Activated B cell treated with CpG ODN at 0.5 μM for 24 hours (primary cell): ENCODE measurements at regions of chr18 and their contacts with region 1.

Region 1: DNA sequence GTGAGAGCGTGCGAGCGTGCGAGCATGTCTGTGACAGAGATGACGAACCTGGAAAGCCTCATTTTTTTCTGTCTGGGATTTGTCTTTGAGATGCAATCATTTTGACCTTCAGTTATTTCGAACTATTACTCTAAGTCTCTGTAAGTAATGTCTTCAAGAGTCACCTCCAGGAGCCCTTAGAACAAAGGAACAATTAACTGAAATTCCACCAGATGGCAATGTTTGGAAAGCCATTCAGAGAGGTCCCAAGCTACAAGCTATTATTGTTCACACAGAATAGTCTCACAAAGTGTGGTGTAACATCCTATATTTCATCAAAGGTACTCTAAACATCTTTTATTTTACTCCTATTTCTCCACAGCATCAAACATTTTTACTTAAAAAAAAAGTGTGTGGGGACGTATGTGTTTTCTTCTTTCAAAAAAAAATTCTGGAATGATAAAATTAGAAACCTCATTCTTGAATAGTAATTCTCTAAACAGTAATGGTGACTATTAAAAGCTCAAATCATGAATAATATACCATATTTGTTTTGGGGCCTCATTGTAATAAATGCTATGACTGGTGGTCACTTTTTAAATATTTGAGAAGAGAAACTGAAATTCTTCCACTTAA is 35.1 kb upstream of the MAPRE2 start:
- DNase-seq: no peak
- ATAC-seq: peak; percentile 83
- H3K4me3 Mint-ChIP-seq: no peak overlapping the region
- H3K27ac Mint-ChIP-seq: no peak overlapping the region
- H3K4me1 Mint-ChIP-seq: no peaks in the 10 kb centered on the region
- H3K27me3 Mint-ChIP-seq: no peaks in the 10 kb centered on the region
- CTCF ChIP-seq: peak; percentile 39

Region 2: DNA sequence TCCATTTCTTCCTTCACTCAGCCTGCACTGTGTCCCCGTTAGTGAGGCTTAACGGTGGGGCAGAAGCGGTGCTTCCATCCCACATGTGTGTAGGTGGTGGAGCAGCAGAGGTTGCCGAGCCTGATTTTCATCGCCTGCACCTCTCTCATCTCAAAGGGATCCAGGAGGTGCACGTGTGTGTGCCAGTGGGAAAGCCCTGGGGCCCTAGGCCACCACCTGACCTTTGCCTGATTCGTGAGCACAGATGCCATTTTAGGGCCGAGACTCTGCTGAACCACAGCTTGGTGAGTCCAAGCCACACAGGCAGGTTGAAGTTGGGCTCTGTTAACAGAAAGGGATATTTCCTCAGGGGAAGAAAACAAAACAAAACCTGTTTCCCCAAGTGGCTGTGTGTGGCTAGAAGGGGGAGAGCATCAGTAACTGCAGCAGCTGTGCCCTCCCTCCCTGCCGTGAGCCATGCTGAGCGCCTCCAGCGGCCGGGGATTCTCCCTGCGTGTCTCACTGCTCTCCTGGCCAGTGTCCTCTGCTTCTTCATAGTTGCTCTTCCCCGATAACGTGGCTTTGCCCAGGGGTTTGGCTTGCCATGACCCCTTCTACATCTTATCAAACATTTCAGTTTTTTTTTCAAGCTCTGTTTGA is 116.6 kb after region 1 on chr18:
- CTCF ChIA-PET with region 1: interaction called, 11 read pairs
- POLR2A ChIA-PET with region 1: no interaction called
- intact Hi-C with region 1: loop called (anchors 5 kb)
- DNase-seq: no peak
- ATAC-seq: peak; percentile 91
- H3K4me3 Mint-ChIP-seq: peak overlapping the region; percentile 4
- H3K27ac Mint-ChIP-seq: peak overlapping the region; percentile 46
- H3K4me1 Mint-ChIP-seq: peaks cover 45% of the 10 kb centered on the region
- H3K27me3 Mint-ChIP-seq: no peaks in the 10 kb centered on the region
- CTCF ChIP-seq: no peak

Region 3: GRCh38 chr18:35185771-35186170 is 179.7 kb after region 1 on chr18:
- CTCF ChIA-PET with region 1: interaction called, 4 read pairs
- POLR2A ChIA-PET with region 1: no interaction called
- intact Hi-C with region 1: loop called (anchors 1 kb)
- DNase-seq: no peak
- ATAC-seq: no peak
- H3K4me3 Mint-ChIP-seq: no peak overlapping the region
- H3K27ac Mint-ChIP-seq: no peak overlapping the region
- H3K4me1 Mint-ChIP-seq: peaks cover 4% of the 10 kb centered on the region
- H3K27me3 Mint-ChIP-seq: no peaks in the 10 kb centered on the region
- CTCF ChIP-seq: no peak

Region 4: GRCh38 chr18:35355140-35355618 is 349.1 kb after region 1 on chr18:
- CTCF ChIA-PET with region 1: interaction called, 8 read pairs
- POLR2A ChIA-PET with region 1: interaction called, 3 read pairs
- intact Hi-C with region 1: loop called (anchors 1 kb)
- DNase-seq: no peak
- ATAC-seq: peak; percentile 100
- H3K4me3 Mint-ChIP-seq: no peak overlapping the region
- H3K27ac Mint-ChIP-seq: no peak overlapping the region
- H3K4me1 Mint-ChIP-seq: peaks cover 5% of the 10 kb centered on the region
- H3K27me3 Mint-ChIP-seq: no peaks in the 10 kb centered on the region
- CTCF ChIP-seq: no peak

Region 5: DNA sequence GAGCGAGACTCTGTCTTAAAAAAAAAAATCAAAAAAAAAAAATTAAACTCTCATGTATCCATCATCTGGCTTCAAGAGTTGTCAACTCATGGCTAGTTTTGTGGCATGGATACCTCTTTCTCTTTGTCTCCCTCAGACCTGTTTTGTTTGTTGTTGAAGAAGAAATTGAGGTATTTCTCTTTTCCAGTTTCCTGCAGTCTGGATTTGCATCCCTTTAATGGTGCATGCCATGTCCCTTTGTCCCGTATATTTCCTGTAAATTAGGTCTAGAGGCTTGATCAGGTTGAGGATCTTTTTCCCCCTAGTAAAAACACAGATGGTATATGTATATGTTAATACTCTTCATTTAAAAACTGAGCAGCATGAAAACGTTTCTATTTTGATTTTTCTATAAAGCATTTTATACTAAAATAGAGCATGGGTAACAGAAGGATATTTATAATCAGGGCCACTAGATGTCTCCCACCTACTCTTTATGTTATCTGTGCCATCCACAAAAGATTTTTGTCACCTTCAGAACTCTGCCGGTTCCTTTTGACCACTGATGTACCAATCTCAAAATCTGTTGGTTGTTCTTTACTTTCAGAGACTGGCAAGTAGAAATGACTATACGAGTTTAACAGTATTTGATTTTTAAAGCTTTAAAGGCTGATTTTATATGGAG is 655.5 kb after region 1 on chr18:
- CTCF ChIA-PET with region 1: no interaction called
- POLR2A ChIA-PET with region 1: no interaction called
- intact Hi-C with region 1: no loop called
- DNase-seq: no peak
- ATAC-seq: no peak
- H3K4me3 Mint-ChIP-seq: no peak overlapping the region
- H3K27ac Mint-ChIP-seq: no peak overlapping the region
- H3K4me1 Mint-ChIP-seq: peaks cover 19% of the 10 kb centered on the region
- H3K27me3 Mint-ChIP-seq: no peaks in the 10 kb centered on the region
- CTCF ChIP-seq: no peak